ENCODE measurements at regions of chr12 and their contacts with region 1.

Region 1: DNA sequence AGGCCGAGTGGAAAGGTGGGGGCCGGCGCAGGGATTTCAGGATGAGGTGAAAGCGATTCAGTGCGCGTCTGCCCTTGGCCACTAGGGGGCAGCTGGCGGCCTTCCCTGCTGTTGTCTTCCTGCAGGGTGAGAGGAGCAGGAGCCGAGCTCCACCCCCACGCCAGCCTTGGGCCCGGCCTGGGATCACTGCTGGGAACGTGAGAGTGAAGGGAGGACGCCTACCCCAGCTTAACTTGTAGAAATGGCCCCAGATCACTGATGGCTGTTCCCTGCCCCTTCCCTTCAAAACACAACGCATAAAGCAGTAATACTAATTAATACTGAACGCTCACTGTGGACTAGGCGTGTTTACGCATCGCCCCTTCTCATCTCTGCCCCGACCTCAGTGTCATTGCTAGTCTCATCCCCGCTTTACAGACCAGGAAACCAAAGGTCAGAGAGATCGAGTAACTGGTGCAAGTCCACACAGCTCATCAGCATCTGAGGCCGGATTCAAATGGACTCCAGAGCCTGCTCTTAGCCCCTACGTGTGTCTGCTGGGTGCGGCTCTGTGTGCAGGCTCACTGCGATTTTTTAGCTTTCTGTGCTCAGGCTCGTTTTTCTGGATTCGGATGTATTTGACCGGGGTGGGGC is 24.3 kb downstream of the MVK start:
- DNase-seq: peak; percentile 88
- CTCF ChIP-seq: peak; percentile 95

Region 2: DNA sequence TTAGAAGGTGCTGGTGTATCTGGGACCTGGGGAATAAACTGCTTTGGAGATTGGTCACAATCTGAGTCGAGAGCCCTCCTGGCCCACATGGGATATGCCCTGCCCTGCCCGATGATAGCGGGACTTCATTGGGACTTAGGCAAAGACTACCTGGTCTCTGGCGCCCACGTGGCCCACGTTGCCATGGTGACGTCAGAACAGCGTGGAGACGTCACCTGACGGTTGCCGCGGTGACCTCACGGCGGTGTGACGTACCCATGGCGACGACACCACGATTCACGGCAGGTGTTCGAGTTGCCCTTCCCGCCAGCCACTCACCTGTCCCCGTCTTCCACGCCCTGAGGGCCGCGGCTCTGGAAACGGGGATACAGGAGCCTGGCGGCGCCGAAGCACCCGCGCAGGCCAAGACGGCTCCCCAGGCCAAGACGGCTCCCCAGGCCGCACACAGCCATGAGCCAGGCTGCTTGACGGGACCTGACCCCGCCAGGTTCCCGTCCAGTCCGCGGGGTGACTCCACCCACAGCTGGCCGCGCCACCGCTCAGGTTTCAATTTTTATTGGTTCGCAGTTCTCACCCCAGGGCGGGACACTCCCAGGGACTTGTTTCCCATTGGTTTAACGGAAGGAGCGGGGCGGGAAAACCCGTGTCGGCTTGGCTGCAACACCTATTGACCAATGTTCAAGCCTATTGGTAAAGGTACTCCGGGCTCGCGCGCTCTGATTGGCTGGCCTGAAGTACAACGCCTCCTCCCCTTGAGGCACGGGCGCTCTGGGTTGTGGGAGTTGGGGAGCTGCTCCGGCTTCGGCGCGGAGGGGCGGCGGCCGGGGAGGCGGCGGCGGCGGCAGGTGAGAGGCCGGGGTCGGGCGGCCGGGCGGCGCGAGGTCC is 24.6 kb before region 1 on chr12 and contains the starts of genes MMAB and MVK:
- CTCF ChIA-PET with region 1: interaction called, 41 read pairs
- POLR2A ChIA-PET with region 1: no interaction called
- DNase-seq: peak; percentile 99
- CTCF ChIP-seq: no peak

Region 3: GRCh38 chr12:109582658-109583057 is 15.3 kb before region 1 on chr12:
- CTCF ChIA-PET with region 1: interaction called, 56 read pairs
- POLR2A ChIA-PET with region 1: no interaction called
- DNase-seq: no peak
- CTCF ChIP-seq: no peak

Region 4: GRCh38 chr12:109612975-109613502 is 15.1 kb after region 1 on chr12:
- CTCF ChIA-PET with region 1: interaction called, 41 read pairs
- POLR2A ChIA-PET with region 1: no interaction called
- DNase-seq: no peak
- CTCF ChIP-seq: no peak

Region 5: DNA sequence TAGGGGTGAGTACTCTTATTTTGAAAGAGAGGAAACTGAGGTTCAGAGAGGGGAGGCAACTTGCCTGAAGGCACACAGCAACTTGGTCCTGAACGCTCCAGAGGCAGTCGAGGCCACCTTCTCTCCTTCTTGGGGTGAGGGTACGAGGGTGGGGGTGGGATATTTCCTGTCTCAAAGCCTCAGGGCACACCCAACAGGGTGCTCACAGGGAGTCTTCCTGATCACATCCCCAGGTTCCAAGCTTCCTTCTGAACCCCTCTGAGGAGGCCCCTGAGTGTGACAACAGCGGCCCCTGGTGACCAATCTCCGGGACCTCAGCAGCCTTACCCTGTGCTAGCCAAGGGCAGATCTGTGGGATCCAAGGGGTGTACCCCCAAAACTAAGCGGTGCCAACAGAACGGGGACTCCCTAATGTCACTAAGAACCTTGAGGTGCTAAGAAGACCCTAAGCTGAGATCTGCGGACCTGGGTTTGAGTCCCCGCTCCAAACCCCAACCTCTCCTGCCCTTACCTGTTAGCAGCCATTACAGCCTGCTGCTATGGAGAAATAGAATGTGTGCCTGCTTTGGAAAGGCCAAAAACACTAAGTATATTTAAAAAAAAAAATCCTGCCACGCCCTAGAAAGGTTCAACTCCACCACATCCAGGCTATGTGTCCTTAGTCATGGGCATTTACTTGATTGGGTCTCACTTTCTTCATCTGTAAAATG is 177.4 kb after region 1 on chr12:
- CTCF ChIA-PET with region 1: interaction called, 38 read pairs
- POLR2A ChIA-PET with region 1: no interaction called
- DNase-seq: peak; percentile 75
- CTCF ChIP-seq: peak; percentile 86